ENCODE measurements at regions of chr1 and their contacts with region 1.

Region 1: DNA sequence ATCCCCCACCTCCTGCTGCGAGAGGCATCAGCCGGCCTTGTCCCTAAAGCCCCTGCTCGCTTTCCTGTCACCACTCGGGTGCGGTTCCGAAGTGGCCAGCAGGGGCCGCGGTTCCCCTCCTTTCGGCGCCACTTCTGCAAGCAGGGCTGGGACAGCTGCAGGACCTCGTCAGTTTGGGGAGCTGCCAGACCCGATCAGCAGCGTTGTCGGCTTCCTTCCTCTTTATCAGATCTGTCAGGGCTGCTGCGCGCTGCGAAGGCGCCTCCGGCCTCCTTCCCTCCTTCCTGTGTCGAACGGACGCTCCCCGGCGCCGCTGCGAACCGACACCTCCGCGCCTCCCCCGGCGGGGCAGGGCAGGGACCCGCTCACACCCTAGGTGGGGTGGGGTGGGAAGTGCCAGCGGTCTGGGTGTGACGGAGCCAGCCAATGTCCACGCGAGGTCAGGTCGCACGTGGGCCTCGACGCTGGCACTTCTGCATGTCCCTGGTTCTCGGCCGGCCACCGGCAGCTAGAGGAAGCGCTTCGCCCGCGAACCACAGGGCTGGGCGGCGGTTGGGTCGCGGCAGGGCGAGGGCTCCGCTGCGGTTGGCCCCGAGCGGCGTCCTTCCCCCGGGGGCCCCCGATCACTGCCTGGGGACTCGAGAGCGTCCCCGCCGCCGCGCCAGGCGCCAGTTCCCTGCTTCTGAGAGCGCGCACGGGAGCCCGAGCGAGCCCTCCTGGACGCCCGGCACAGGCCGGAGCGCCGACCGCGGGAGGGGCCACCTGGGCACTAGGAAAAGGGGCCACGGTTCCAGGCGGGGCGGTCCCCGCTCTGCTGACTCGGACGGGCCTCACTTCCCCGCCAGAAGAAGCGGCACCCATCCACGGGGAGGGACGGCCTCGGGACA is 81.8 kb downstream of the RUNX3 start:
- DNase-seq: peak; percentile 94
- H3K4me3 Mint-ChIP-seq: peak overlapping the region; percentile 65
- H3K27ac Mint-ChIP-seq: no peak overlapping the region
- H3K4me1 Mint-ChIP-seq: peaks cover 14% of the 10 kb centered on the region
- H3K27me3 Mint-ChIP-seq: no peaks in the 10 kb centered on the region

Region 2: DNA sequence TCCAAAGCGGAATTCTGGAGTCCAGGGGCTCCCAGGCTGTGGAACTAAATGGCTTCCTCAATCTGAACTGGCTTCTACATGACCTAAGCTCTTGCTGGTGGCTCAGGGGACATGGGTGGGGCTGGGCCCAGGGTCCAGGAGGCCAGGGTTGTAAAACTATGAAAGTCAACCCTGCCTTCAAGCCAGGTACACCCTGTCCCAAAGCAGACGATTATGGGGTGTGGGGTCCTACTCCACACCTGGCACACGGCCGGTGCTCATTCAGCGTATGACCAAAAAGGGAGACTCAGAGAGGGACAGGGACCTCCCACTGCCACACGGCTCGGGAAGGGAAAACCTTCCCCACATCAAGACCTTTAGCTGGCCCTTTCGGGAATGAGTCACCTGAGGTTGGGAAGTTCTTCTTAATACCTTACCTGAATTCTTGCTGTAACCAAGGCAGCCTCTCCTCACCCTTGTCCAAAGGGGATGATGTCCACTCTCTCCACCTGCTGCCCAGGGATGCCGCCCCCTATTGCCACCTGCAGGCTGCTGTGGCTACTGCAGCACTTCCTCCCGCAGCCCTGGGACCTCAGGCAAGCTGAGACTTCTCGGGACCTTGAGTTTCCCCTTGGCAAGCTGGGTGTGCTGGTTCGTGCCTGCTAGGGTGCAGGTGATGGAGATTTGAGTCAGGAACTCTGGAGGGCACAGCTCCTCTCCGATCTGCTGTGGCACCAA is 49.7 kb after region 1 on chr1:
- CTCF ChIA-PET with region 1: interaction called, 12 read pairs
- POLR2A ChIA-PET with region 1: interaction called, 3 read pairs
- intact Hi-C with region 1: loop called (anchors 2 kb)
- DNase-seq: peak; percentile 69
- H3K4me3 Mint-ChIP-seq: no peak overlapping the region
- H3K27ac Mint-ChIP-seq: no peak overlapping the region
- H3K4me1 Mint-ChIP-seq: peaks cover 23% of the 10 kb centered on the region
- H3K27me3 Mint-ChIP-seq: no peaks in the 10 kb centered on the region

Region 3: DNA sequence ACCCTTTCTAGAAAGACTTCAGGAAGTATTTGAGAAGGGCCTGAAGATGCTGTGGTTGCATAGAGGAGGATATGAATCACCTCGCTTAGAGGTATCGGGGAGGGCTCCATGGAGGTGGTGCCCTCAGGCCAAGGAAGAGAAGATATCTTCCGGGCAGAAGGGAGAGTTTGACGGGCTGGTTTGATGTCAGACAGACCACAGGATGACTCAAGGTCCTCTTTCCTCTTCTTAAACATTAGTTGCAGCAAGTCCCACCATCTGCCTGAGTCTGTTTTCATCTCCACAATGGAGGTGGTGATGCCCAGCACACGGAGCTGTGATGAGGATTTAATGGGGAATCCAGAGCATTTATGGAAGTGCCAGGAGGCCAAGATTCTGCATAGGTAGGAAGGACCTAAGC is 106.9 kb after region 1 on chr1:
- CTCF ChIA-PET with region 1: interaction called, 7 read pairs
- POLR2A ChIA-PET with region 1: no interaction called
- intact Hi-C with region 1: loop called (anchors 2 kb)
- DNase-seq: peak; percentile 90
- H3K4me3 Mint-ChIP-seq: peak overlapping the region; percentile 83
- H3K27ac Mint-ChIP-seq: peak overlapping the region; percentile 89
- H3K4me1 Mint-ChIP-seq: peaks cover 90% of the 10 kb centered on the region
- H3K27me3 Mint-ChIP-seq: no peaks in the 10 kb centered on the region

Region 4: GRCh38 chr1:25148673-25149300 is 300.5 kb after region 1 on chr1:
- CTCF ChIA-PET with region 1: interaction called, 19 read pairs
- POLR2A ChIA-PET with region 1: no interaction called
- intact Hi-C with region 1: loop called (anchors 2 kb)
- DNase-seq: peak; percentile 37
- H3K4me3 Mint-ChIP-seq: no peak overlapping the region
- H3K27ac Mint-ChIP-seq: no peak overlapping the region
- H3K4me1 Mint-ChIP-seq: no peaks in the 10 kb centered on the region
- H3K27me3 Mint-ChIP-seq: peaks cover 25% of the 10 kb centered on the region